A673 (cell line): ENCODE measurements at regions of chr6 and their contacts with region 1.

Region 1: DNA sequence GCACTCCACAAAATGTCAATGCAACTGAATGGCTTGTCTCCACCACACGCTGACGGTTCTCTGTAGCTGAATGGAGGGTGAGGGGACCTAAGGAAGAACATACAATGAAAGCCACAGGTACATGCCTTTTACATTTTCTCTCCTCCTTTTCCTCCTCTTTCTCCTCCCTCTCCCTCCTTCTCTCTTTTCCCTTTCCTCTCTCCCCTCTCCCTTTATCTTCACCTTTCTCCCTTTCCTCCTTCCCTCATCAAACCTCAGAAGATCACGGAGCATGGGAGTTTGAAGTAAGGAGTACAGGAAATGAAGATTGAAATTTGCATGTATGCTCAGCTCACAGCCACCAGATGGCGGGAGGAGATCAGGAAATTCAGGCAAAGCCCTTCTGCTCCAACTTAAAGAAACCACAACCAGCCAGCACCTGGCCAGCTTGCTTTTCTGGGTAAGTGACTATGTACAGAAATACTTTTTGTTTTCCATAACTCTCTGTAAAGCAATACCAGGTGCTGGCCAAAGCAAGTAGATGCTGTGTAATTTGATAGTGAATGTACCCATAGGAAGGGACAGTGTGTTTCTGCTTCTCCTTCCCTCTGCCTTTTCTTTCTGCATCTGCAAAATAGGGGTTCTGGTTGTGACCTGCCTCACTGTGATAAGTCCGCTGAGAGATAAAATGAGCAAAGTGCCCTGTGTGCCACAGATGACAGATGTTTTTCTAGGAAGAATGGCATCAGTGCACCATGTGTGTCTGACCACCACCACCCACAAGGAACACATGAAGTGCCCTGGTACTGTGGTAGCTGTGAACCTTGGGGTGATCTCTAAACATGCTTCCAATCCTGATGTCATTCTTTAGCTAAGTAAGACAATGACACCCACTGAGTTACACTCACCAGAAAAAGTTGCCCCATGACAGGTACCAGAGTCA is 18.6 kb upstream of the FOXO3 start:
- DNase-seq: peak; percentile 81
- H3K4me3 ChIP-seq: no peak overlapping the region
- H3K27ac ChIP-seq: no peak overlapping the region
- H3K4me1 ChIP-seq: no peaks in the 10 kb centered on the region
- H3K27me3 ChIP-seq: no peaks in the 10 kb centered on the region
- CTCF ChIP-seq: peak; percentile 89

Region 2: GRCh38 chr6:108689247-108690161 is 147.4 kb after region 1 on chr6:
- CTCF ChIA-PET with region 1: no interaction called
- POLR2A ChIA-PET with region 1: no interaction called
- intact Hi-C with region 1: no loop called
- DNase-seq: no peak
- H3K4me3 ChIP-seq: no peak overlapping the region
- H3K27ac ChIP-seq: no peak overlapping the region
- H3K4me1 ChIP-seq: no peaks in the 10 kb centered on the region
- H3K27me3 ChIP-seq: no peaks in the 10 kb centered on the region
- CTCF ChIP-seq: no peak

Region 3: DNA sequence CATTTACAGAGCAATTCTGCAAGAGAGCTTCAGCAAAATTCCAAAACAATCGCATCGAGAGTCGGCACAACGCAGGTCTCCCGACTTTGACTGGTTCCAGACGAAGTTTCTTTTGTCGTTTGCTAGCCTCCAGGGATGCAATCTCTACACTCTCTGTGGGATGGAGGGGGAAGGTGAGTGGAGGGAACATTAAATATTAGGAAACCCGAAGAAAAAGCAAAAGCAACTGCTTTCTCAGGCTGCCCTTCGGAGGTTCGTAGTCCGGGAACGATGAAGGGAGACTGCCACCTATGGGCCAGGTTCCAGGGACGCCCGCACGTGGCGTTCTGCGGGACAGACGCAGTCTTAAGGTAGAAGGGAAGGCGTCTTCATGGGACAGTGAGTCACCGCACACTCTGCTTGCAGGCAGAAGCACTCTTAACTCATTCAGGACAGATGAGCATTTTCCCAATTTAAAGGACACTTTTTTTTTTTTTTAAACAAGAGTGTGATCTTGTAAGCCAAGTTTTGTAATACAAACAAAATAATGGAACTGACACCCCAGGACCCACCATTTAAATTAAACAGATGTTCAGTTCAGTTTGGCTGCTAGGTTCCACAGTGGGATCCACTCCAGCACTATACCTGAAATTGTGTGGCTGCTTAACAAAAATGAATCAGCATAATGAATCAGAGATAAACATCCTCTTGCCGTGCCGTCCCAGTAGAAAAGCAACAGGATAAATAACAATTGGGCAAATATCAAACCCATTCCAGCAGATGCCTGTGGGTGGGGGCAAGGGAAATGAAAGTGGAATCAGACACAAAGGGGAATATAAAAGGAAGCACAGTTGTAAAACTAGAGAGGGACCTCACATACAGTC is 240.3 kb after region 1 on chr6:
- CTCF ChIA-PET with region 1: interaction called, 7 read pairs
- POLR2A ChIA-PET with region 1: no interaction called
- intact Hi-C with region 1: loop called (anchors 2 kb)
- DNase-seq: peak; percentile 83
- H3K4me3 ChIP-seq: peak overlapping the region; percentile 46
- H3K27ac ChIP-seq: no peak overlapping the region
- H3K4me1 ChIP-seq: peaks cover 18% of the 10 kb centered on the region
- H3K27me3 ChIP-seq: no peaks in the 10 kb centered on the region
- CTCF ChIP-seq: peak; percentile 91

Region 4: DNA sequence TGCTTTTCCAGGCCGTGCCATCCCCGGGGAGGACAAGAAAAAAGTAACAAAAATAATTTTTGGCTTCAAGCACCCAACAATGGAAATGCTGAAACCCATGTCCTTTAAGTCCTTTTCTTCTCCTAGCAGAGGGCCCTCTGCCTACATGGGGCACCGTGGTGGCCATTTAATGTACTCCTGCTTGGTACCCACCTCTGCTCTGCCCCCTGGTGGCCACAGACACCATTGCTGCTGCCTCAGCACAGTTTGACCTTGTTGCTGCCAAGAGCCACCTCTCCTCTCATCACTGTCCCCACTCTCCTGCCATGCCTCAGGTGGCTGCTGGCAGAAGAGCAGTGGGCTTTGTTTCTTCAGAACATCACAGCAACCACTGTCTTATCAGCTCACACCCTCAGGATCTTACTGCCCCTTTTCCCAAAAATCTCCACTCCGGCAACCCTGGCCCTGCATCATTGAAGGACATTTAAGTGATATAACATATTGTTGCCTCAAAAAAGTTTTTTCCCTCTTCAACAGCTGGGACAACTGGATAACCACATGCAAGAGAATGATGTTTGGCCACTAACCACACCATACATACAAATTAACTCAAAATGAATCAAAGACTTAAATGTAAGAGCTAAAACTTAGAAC is 293.2 kb after region 1 on chr6:
- CTCF ChIA-PET with region 1: interaction called, 7 read pairs
- POLR2A ChIA-PET with region 1: no interaction called
- intact Hi-C with region 1: loop called (anchors 1 kb)
- DNase-seq: peak; percentile 81
- H3K4me3 ChIP-seq: no peak overlapping the region
- H3K27ac ChIP-seq: no peak overlapping the region
- H3K4me1 ChIP-seq: no peaks in the 10 kb centered on the region
- H3K27me3 ChIP-seq: no peaks in the 10 kb centered on the region
- CTCF ChIP-seq: peak; percentile 95

Region 5: GRCh38 chr6:108896111-108896661 is 354.1 kb after region 1 on chr6:
- CTCF ChIA-PET with region 1: interaction called, 41 read pairs
- POLR2A ChIA-PET with region 1: no interaction called
- intact Hi-C with region 1: loop called (anchors 1 kb)
- DNase-seq: no peak
- H3K4me3 ChIP-seq: no peak overlapping the region
- H3K27ac ChIP-seq: no peak overlapping the region
- H3K4me1 ChIP-seq: peaks cover 10% of the 10 kb centered on the region
- H3K27me3 ChIP-seq: no peaks in the 10 kb centered on the region
- CTCF ChIP-seq: no peak

Region 6: DNA sequence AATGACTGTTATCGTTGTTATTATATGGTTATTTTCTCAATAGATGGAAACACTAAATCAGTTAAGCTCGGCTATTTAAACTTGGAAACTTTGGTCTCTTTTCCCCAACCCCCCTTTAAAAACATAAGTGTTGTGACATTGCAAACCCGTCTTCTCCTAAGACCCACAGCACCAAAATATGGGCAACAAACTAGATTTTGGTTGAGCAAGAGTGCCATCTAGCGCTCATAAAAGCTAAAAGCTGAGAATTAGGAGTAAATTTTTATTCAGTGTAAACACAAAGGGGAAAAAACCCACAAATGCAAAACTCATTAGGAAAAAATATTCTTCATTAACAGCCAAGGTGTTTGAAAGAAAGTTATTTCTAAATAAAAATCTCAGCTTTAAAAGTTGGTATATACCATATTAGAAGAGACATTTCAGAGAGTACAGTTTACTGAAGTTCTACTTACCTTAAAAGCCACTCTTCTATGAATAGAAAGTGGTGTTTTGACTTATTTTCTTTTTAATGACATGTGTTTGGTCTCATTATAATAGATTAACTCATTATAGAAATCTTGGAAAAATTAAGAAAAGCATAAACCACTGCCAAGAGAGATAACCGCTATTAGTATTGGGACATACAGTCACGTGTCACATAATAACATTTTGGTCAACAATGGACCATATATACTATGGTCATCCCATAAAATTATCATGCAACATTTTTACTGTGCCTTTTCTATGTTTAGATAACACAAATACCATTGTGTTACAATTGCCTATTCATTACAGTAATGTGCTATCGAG is 531.4 kb after region 1 on chr6:
- CTCF ChIA-PET with region 1: interaction called, 11 read pairs
- POLR2A ChIA-PET with region 1: no interaction called
- intact Hi-C with region 1: loop called (anchors 1 kb)
- DNase-seq: peak; percentile 77
- H3K4me3 ChIP-seq: no peak overlapping the region
- H3K27ac ChIP-seq: no peak overlapping the region
- H3K4me1 ChIP-seq: peaks cover 3% of the 10 kb centered on the region
- H3K27me3 ChIP-seq: no peaks in the 10 kb centered on the region
- CTCF ChIP-seq: peak; percentile 71

Region 7: GRCh38 chr6:109382576-109383437 is 840.7 kb after region 1 on chr6:
- CTCF ChIA-PET with region 1: interaction called, 4 read pairs
- POLR2A ChIA-PET with region 1: no interaction called
- intact Hi-C with region 1: loop called (anchors 10 kb)
- DNase-seq: peak; percentile 97
- H3K4me3 ChIP-seq: peak overlapping the region; percentile 94
- H3K27ac ChIP-seq: peak overlapping the region; percentile 99
- H3K4me1 ChIP-seq: peaks cover 18% of the 10 kb centered on the region
- H3K27me3 ChIP-seq: no peaks in the 10 kb centered on the region
- CTCF ChIP-seq: peak; percentile 73